Sigmoid colon (tissue), 7 donors: ENCODE measurements at regions of chr20 and their contacts with region 1.

Region 1: GRCh38 chr20:1844325-1845162 is 50.7 kb upstream of the SIRPA start:
- DNase-seq: peak; percentile 94
- H3K4me3 ChIP-seq: no peak overlapping the region
- H3K27ac ChIP-seq: peak overlapping the region; percentile 28 to 89 (median 81)
- H3K4me1 ChIP-seq: peaks cover 0 to 62% (median 52%) of the 10 kb centered on the region in 4 donors
- H3K27me3 ChIP-seq: no peaks in the 10 kb centered on the region
- CTCF ChIP-seq: peak in 2 of 4 experiments; percentile 6 to 10
- EP300 ChIP-seq: peak; percentile 59 to 88 (median 80)
- POLR2A ChIP-seq: no peak

Region 2: DNA sequence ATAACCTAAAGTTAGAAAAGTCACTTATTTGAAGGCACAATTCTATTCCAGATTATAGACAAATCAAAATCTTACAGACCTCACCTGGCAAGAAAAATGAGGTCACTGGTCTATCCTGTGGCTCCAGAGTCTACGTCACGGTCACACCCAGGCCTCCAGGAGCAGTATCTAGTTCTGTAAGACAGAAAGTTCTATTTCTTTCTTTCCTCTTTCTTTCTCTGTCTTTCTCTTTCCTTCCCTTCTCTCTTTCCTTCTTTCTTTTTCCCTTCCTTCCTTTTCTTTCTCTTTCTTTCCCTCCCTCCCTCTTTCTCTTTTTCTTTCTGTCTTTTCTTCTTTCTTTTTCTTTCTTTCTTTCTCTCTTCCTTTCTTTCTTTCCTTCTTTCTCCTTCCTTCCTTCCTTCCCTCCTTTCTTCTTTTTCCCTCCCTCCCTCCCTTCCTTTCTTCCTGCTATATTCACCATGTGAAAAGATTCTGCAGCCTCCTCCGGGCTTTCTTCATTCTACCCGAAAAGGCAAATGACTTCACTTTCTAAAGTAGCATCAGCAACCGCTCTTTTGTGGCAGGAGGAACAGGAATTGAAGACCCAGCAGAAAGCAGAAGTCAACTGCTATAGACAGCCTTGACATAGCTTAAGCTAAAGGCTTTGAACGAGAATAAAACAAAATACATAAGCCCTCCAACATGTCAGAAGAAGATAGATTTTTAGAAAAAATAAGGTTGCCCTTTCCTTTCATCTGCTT is 103.1 kb before region 1 on chr20:
- intact Hi-C with region 1: no loop called
- DNase-seq: no peak
- H3K4me3 ChIP-seq: no peak overlapping the region
- H3K27ac ChIP-seq: no peak overlapping the region
- H3K4me1 ChIP-seq: no peaks in the 10 kb centered on the region
- H3K27me3 ChIP-seq: no peaks in the 10 kb centered on the region
- CTCF ChIP-seq: no peak
- EP300 ChIP-seq: no peak
- POLR2A ChIP-seq: no peak

Region 3: GRCh38 chr20:1861347-1861976 is 16.9 kb after region 1 on chr20:
- intact Hi-C with region 1: no loop called
- DNase-seq: no peak
- H3K4me3 ChIP-seq: no peak overlapping the region
- H3K27ac ChIP-seq: no peak overlapping the region
- H3K4me1 ChIP-seq: no peaks in the 10 kb centered on the region
- H3K27me3 ChIP-seq: no peaks in the 10 kb centered on the region
- CTCF ChIP-seq: no peak
- EP300 ChIP-seq: no peak
- POLR2A ChIP-seq: no peak

Region 4: DNA sequence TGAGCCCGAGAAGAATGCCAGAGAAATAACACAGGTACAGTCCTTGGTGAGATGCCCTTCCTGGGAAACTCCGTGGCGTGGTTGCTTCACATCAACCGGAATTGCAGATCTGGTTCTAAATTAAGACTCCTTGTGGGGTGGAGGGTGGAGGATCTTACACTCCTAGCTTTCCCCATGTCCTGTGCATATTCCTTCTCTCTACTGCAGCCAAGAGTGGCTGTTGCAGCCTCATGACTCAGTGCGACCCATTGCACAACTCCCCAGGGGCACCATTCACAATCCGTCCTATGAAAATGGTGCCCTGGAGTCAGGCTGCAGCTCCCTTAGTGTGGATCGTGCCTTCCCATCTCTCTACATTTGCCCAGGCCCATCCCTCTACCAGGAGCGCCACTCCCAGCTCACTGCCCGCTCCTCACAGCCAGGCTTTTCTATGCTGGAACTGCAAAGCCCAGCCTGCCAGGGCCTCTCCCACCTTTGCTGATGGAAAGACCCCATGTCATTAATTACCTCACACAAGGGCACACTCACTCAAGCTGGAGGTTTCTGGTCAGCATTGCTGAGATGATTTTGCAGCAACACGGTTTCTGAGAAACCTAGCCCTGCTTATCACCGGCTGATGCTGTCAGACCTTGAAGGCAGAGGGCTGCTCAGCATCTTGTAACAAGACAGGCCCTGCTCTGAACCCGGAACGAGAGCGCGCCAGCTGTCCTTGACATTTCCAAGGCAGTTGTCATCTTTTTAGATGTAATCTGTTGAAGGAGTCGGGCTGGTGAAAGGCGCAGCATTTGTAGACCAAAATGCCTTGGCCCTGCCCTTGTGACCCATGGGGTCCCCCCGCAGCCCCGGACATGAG is 90.4 kb after region 1 on chr20:
- intact Hi-C with region 1: loop called (anchors 2 kb)
- DNase-seq: peak; percentile 92
- H3K4me3 ChIP-seq: no peak overlapping the region
- H3K27ac ChIP-seq: peak overlapping the region; percentile 60 to 79 (median 64)
- H3K4me1 ChIP-seq: peaks cover 0 to 35% (median 28%) of the 10 kb centered on the region in 4 donors
- H3K27me3 ChIP-seq: no peaks in the 10 kb centered on the region
- CTCF ChIP-seq: no peak
- EP300 ChIP-seq: peak in 1 of 4 donors; percentile 17
- POLR2A ChIP-seq: no peak